Astrocyte of the cerebellum (primary cell): ENCODE measurements at regions of chr3 and their contacts with region 1.

Region 1: GRCh38 chr3:170641510-170642236 is 55.8 kb upstream of the SLC7A14 start:
- DNase-seq: no peak
- H3K4me3 ChIP-seq: no peak overlapping the region
- CTCF ChIP-seq: no peak

Region 2: GRCh38 chr3:170553277-170553676 is 88.4 kb before region 1 on chr3:
- in situ Hi-C with region 1: no loop called
- DNase-seq: no peak
- H3K4me3 ChIP-seq: no peak overlapping the region
- CTCF ChIP-seq: no peak

Region 3: GRCh38 chr3:170563712-170564423 is 77.8 kb before region 1 on chr3:
- in situ Hi-C with region 1: loop called (anchors 5 kb)
- DNase-seq: no peak
- H3K4me3 ChIP-seq: no peak overlapping the region
- CTCF ChIP-seq: no peak